A549 (cell line): ENCODE measurements at regions of chr1 and their contacts with region 1.

Region 1: DNA sequence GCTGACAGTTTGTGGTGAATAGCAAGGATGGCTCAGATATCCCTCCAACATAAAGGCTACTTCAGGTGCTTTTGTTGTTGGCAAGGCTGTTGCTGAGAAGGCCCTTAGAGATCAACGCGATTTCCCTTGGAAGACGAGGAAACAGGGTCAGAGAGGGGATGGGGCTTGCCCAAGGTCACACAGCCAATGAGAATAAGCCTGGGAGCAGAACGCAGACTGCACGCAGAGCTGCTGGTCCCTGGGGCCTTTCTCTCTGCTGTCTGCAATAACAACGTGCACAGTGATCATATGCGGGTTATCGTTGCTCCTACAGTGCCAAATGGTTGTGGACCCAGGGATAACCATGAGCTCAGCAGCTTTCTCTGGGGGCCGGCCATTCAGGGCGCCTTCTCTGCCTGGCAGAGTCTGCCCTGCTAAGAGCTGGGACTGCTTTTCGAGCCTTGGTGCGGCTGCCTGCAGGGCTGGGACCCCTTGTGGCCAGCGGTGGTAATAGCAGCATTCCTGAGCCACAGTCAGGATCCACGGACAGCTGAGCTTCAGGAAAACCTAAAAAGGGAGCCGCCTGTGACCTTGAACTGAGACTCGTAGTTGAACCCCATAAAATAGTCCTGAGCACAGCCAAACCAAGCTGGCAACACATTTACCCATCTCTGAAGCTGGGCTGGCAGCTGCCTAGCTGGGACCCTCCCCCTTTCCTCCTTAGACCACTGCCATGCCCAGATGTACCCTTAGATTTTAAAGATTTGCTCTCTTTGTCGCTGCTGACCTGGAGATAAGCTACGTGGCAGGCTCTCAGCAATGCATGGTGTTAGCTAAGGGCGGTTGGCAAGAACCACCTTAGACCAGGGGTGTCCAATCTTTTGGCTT is 39.8 kb downstream of the HTR6 start:
- DNase-seq: peak; percentile 60 to 76
- ATAC-seq: peak; percentile 98 to 99
- H3K4me3 ChIP-seq: no peak overlapping the region
- H3K27ac ChIP-seq: no peak overlapping the region
- H3K4me1 ChIP-seq: no peaks in the 10 kb centered on the region
- CTCF ChIP-seq: peak; percentile 58
- EP300 ChIP-seq: no peak
- POLR2A ChIP-seq: no peak
- RAD21 ChIP-seq: peak; percentile 24 to 34; a peak in 2 of 5 replicates

Region 2: DNA sequence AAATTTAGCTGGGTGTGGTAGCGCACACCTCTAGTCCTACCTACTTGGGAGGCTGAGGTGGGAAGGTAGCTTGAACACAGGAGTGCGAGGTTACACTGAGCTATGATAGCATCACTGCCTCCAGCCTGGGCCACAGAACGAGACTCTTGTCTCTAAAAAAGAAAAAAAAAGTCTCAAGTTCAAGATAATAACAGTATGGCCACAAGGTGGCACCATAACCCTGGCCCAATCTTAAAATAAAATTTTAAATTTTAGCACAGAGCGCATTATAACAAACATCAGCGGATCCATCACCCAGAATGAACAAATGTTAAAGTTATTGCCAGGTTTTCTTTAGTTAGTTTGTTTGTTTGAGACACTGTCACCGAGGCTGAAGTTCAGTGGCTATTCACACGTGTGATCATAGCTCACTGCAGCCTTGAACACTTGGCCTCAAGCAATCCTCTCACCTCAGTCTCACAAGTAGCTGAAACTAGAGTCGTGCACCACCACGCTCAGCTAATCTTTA is 42.7 kb before region 1 on chr1:
- CTCF ChIA-PET with region 1: interaction called, 41 read pairs
- POLR2A ChIA-PET with region 1: no interaction called
- DNase-seq: peak in 1 of 2 experiments; percentile 35
- ATAC-seq: no peak
- H3K4me3 ChIP-seq: no peak overlapping the region
- H3K27ac ChIP-seq: no peak overlapping the region
- H3K4me1 ChIP-seq: peaks cover 7% of the 10 kb centered on the region; the same call in 1 of the 3 replicates
- CTCF ChIP-seq: peak; percentile 76
- EP300 ChIP-seq: no peak
- POLR2A ChIP-seq: no peak
- RAD21 ChIP-seq: peak; percentile 62 to 64

Region 3: DNA sequence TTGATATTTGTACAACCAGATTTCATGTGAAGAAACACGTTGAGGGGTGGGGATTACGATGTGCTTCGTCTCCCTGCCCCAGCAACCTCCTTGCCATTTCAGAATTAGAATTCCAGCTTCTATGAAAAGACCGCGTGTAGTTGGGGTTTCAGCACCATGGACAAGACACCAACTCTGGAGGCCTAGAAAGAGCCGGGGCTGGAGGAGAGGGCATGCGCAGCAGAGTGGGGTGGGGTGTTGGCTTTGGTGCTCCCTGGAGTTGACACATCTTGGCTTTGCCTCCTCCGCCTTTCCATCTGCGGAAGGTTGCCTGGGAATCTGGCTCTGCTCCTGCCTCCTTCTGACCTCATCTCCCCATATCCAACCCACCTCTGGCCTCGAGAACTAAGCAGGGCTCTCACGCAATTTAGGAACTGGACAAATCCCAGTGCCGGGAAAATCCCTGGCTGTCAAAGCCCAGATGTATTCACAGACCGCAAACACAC is 28.0 kb before region 1 on chr1:
- CTCF ChIA-PET with region 1: interaction called, 15 read pairs
- POLR2A ChIA-PET with region 1: interaction called, 3 read pairs
- DNase-seq: peak in 1 of 2 experiments; percentile 28
- ATAC-seq: peak in 1 of 2 experiments; percentile 64; a peak in 3 of 6 replicates
- H3K4me3 ChIP-seq: no peak overlapping the region
- H3K27ac ChIP-seq: no peak overlapping the region
- H3K4me1 ChIP-seq: no peaks in the 10 kb centered on the region
- CTCF ChIP-seq: no peak
- EP300 ChIP-seq: no peak
- POLR2A ChIP-seq: no peak
- RAD21 ChIP-seq: no peak

Region 4: GRCh38 chr1:19689085-19689757 is 15.3 kb before region 1 on chr1:
- CTCF ChIA-PET with region 1: interaction called, 21 read pairs
- POLR2A ChIA-PET with region 1: no interaction called
- DNase-seq: no peak
- ATAC-seq: no peak
- H3K4me3 ChIP-seq: no peak overlapping the region
- H3K27ac ChIP-seq: no peak overlapping the region
- H3K4me1 ChIP-seq: no peaks in the 10 kb centered on the region
- CTCF ChIP-seq: no peak
- EP300 ChIP-seq: no peak
- POLR2A ChIP-seq: no peak
- RAD21 ChIP-seq: no peak

Region 5: DNA sequence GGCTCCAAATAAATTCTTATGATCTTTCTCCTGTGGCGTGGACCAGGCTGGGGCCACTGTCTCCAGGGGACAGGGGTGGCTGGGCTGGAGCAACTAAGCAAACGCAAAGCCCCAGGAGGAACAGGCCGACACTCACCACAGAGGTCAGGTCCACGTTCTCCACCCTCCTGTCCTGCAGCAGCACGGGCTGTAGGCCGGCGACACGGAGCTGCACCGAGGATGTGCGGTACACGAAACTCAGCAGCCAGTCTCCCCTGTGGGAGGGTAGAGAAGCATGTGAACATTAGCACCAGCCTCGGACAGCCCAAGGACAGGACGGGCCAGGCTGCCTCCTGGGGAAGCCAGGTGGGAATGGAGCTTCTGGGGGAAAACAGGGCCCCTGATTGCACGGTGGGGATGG is 10.2 kb before region 1 on chr1:
- CTCF ChIA-PET with region 1: interaction called, 21 read pairs
- POLR2A ChIA-PET with region 1: no interaction called
- DNase-seq: no peak
- ATAC-seq: no peak
- H3K4me3 ChIP-seq: no peak overlapping the region
- H3K27ac ChIP-seq: no peak overlapping the region
- H3K4me1 ChIP-seq: no peaks in the 10 kb centered on the region
- CTCF ChIP-seq: no peak
- EP300 ChIP-seq: no peak
- POLR2A ChIP-seq: no peak
- RAD21 ChIP-seq: no peak

Region 6: DNA sequence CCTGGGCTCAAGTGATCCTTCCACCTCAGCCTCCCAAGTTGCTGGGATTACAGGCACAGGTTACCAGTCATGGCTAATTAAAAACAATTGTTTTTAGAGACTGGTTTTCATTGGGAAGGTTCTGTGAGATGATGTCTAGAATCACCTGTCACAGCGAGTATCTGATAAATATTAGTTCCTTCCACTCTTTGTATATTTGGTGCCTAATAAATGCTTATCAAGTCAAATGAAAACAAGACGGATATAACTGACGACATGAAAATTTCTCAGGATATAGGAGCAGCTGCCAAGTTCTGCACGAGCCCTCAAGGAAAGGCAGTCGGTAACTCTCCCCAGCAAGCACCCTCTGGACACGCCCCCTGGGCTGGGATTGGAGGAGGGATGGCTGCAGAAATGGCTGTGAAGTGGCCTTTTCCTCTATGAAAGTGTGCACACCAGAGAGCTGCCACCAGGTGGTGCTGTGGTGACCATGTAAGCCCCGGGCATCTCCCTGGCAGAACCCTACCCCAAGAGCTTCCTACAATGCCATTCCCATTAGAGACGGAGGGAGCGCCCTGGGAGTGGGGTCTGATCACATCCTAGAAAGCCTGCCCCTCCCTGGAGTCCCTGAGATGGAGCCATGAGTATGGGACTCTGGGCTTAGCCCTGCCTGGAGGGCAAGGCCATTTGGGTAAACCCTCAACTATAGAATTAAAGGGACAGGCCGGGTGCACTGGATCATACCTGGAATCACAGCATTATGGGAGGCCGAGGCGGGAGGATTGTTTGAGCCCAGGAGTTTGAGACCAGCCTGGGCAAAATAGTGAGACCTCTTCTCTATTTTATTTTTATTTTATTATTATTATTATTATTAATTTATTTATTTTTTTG is 11.1 kb after region 1 on chr1:
- CTCF ChIA-PET with region 1: interaction called, 37 read pairs
- POLR2A ChIA-PET with region 1: no interaction called
- DNase-seq: peak; percentile 86 to 93
- ATAC-seq: peak; percentile 99 to 100
- H3K4me3 ChIP-seq: no peak overlapping the region
- H3K27ac ChIP-seq: no peak overlapping the region
- H3K4me1 ChIP-seq: no peaks in the 10 kb centered on the region
- CTCF ChIP-seq: peak; percentile 66
- EP300 ChIP-seq: no peak
- POLR2A ChIP-seq: no peak
- RAD21 ChIP-seq: peak; percentile 45; a peak in 4 of 5 replicates